ENCODE measurements at regions of chr2 and their contacts with region 1.

Region 1: DNA sequence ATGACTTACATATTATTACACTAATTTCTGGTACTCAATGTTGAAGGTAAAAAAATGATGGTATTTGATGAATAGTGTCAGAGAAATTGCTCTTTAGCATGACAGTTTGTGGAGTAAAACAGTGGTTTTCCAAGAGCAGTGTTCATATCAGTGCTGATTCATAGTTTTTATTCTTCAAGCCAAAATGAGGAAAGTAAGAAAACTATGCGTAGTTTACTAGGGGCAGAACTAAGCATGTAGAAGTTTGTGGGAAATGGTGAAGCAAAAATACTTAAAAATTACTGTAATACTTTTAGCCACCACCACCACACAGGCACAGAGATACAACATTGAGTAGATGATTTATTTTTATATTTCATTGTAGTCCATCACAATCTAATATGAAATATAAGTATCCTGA is 137.3 kb downstream of the ZNF804A start:
- DNase-seq: no peak
- H3K4me3 ChIP-seq: no peak overlapping the region
- CTCF ChIP-seq: no peak
- POLR2A ChIP-seq: no peak

Region 2: DNA sequence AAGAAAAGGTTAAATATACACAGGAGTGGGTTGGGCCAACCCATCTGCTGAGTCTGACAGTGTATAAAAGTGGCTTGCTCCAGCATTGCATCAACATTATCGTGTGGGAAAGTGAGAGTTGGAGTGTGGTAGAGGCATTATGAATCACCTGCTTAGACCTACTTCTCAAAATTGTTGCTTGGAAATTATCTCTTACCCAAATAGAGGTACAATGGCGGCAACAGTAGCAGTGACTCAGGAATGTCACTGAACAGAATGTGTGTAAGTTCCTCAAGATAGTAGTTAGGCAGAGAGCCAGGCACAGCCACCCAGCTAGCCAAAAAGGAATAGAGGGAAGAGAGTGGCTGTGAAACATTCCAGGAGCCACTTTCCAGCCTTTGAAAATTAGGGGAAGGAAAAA is 995.4 kb before region 1 on chr2:
- intact Hi-C with region 1: loop called (anchors 5 kb)
- DNase-seq: no peak
- H3K4me3 ChIP-seq: no peak overlapping the region
- CTCF ChIP-seq: no peak
- POLR2A ChIP-seq: no peak